Activated B cell treated with CpG ODN at 0.5 μM for 24 hours (primary cell): ENCODE measurements at regions of chr7 and their contacts with region 1.

Region 1: DNA sequence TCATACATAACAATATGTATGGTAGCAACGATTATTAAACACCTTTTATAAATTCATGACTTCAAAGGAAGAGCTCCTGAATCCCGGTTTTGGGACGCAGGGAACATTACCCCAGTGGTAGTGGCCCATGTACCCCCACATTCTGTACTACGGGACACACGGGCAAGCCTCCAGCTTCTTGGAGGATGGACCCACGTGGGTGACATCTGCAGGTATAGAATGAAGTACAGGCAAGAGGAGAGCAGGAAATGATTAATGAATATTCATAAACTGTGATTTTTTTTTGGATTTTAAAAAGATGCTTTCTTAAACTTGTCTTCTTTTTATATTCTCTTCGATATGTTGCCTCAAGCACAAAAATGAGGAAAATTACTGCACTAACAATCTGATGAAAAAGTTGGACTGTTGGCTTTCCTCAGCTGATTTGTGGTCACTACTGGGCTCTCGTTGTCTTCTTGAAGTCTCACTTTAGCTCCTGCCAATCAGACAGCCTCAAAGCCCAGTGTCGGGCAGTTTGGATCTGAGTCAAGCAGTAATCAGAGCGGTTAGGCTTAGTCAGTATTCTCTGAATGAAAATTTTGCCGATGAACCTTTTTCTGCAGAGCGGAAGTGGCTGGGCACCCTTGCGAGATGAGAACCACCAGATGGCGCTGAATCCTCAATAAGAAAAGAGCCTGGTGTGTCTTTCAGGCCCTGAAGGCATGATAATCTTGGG is 157.7 kb upstream of the CDCA7L start:
- DNase-seq: peak; percentile 26
- ATAC-seq: peak; percentile 95
- H3K4me3 Mint-ChIP-seq: no peak overlapping the region
- H3K27ac Mint-ChIP-seq: no peak overlapping the region
- H3K4me1 Mint-ChIP-seq: peaks cover 3% of the 10 kb centered on the region
- H3K27me3 Mint-ChIP-seq: peaks cover 26% of the 10 kb centered on the region
- CTCF ChIP-seq: no peak

Region 2: GRCh38 chr7:22082886-22083703 is 20.3 kb before region 1 on chr7:
- CTCF ChIA-PET with region 1: interaction called, 7 read pairs
- POLR2A ChIA-PET with region 1: no interaction called
- intact Hi-C with region 1: loop called (anchors 1 kb)
- DNase-seq: peak; percentile 91
- ATAC-seq: peak; percentile 97
- H3K4me3 Mint-ChIP-seq: peak overlapping the region; percentile 89
- H3K27ac Mint-ChIP-seq: peak overlapping the region; percentile 70
- H3K4me1 Mint-ChIP-seq: peaks cover 13% of the 10 kb centered on the region
- H3K27me3 Mint-ChIP-seq: peaks cover 25% of the 10 kb centered on the region
- CTCF ChIP-seq: peak; percentile 83

Region 3: DNA sequence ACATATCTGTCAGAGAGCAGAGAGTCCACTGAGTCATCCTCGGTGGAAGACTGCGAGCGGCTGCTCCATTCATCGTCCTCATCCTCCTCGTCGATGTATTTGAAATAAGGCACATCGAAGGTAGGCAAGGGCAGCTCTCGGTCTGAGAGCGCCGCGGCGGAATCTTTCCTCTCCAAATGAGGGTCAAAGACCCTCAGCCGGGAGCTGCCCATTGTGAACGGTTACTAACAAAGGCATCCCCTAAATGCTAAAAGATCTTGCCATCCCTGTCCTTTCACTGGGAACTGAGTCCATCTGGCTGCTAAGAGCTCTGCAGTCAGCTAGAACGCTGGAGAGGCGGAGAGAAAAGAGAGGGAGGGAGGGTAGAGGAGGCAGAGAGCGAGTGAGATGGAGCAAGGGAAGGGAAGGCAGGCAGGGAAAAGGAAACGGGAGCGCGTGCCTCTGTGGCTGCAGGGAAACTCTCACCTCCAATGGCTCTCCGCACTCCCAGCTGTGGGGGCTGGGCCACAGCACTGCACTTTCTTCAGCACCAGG is 90.1 kb after region 1 on chr7:
- CTCF ChIA-PET with region 1: no interaction called
- POLR2A ChIA-PET with region 1: no interaction called
- intact Hi-C with region 1: no loop called
- DNase-seq: no peak
- ATAC-seq: no peak
- H3K4me3 Mint-ChIP-seq: no peak overlapping the region
- H3K27ac Mint-ChIP-seq: no peak overlapping the region
- H3K4me1 Mint-ChIP-seq: no peaks in the 10 kb centered on the region
- H3K27me3 Mint-ChIP-seq: no peaks in the 10 kb centered on the region
- CTCF ChIP-seq: no peak

Region 4: DNA sequence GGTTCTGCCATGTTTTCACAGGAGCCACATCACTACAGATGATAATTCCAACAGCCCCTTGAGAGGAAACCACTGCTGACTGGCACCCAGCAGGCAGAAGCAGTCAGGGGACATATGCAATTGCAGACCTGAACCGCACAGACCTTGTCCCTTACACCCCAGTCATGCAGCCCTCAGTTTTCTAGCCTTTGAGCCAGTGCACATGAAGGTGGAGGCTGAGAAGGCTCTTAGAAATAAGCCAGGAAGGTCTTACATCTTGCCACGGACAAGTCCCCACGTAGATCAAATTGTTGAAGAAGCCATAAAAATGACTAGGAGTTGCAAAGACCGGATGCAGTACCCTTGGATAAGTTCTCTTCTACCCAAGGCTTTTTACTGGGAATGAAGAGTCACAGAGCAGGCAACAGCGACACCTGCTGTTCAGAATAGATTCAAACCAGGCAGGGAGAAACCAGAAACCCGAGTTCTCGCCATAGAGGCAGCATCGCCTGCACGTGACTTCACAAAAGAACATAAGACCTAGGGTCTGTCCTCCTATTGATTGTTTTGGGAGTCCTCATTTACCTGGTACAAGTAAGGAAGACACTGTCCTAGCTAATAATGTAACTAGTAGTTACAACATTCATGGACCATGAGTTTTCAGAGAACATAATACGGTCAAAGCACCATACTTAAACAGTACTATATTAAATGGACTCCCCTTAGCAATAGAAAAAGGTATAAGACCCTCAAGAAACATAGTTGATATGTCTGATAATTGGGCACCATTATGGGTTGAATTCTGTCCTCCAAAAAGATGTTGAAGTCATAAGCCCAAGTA is 385.4 kb after region 1 on chr7:
- CTCF ChIA-PET with region 1: interaction called, 43 read pairs
- POLR2A ChIA-PET with region 1: no interaction called
- intact Hi-C with region 1: loop called (anchors 1 kb)
- DNase-seq: no peak
- ATAC-seq: peak; percentile 70
- H3K4me3 Mint-ChIP-seq: no peak overlapping the region
- H3K27ac Mint-ChIP-seq: no peak overlapping the region
- H3K4me1 Mint-ChIP-seq: peaks cover 3% of the 10 kb centered on the region
- H3K27me3 Mint-ChIP-seq: no peaks in the 10 kb centered on the region
- CTCF ChIP-seq: peak; percentile 55

Region 5: GRCh38 chr7:22499044-22499443 is 395.6 kb after region 1 on chr7:
- CTCF ChIA-PET with region 1: interaction called, 36 read pairs
- POLR2A ChIA-PET with region 1: no interaction called
- intact Hi-C with region 1: loop called (anchors 1 kb)
- DNase-seq: no peak
- ATAC-seq: no peak
- H3K4me3 Mint-ChIP-seq: no peak overlapping the region
- H3K27ac Mint-ChIP-seq: no peak overlapping the region
- H3K4me1 Mint-ChIP-seq: peaks cover 8% of the 10 kb centered on the region
- H3K27me3 Mint-ChIP-seq: peaks cover 7% of the 10 kb centered on the region
- CTCF ChIP-seq: no peak

Region 6: DNA sequence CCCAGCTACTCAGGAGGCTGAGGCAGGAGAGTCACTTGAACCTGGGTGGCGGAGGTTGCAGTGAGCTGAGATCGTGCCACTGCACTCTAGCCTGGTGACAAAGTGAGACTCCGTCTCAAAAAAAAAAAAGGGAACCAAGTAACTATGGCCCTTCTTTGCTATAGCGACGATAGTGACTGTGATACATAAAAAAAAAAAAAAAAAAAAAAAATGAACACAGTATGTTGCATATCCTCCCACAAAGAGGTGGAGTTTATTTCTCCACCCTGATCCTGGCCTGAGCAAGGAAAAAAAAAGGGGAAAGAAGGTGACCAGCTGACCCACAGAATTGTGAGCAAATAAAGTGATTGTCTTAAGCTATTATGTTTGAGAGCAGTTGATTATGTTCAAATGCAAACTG is 438.8 kb after region 1 on chr7:
- CTCF ChIA-PET with region 1: no interaction called
- POLR2A ChIA-PET with region 1: no interaction called
- intact Hi-C with region 1: no loop called
- DNase-seq: no peak
- ATAC-seq: peak; percentile 28
- H3K4me3 Mint-ChIP-seq: no peak overlapping the region
- H3K27ac Mint-ChIP-seq: no peak overlapping the region
- H3K4me1 Mint-ChIP-seq: no peaks in the 10 kb centered on the region
- H3K27me3 Mint-ChIP-seq: no peaks in the 10 kb centered on the region
- CTCF ChIP-seq: no peak

Region 7: DNA sequence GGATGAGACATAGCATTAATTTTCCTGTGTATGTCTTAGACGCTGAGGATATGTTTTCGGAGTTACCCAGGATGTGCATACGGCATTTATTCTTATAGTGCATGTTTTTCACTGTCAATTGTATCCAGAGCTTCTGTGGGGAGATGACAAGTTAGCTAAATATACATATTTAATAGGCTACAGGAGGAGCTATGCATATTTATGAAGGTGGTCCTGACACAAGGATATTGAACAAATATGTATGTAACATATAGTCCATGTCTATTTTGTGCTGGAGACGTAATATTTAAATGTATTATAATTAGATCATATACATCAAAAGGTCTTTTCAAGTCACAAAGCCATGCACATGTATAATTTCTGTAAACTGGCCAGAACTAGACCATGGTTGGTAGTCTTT is 639.6 kb after region 1 on chr7:
- CTCF ChIA-PET with region 1: no interaction called
- POLR2A ChIA-PET with region 1: no interaction called
- intact Hi-C with region 1: loop called (anchors 10 kb)
- DNase-seq: no peak
- ATAC-seq: no peak
- H3K4me3 Mint-ChIP-seq: no peak overlapping the region
- H3K27ac Mint-ChIP-seq: no peak overlapping the region
- H3K4me1 Mint-ChIP-seq: peaks cover 2% of the 10 kb centered on the region
- H3K27me3 Mint-ChIP-seq: no peaks in the 10 kb centered on the region
- CTCF ChIP-seq: no peak